Mucosa of descending colon (tissue), 3 donors: ENCODE measurements at regions of chr3 and their contacts with region 1.

Region 1: GRCh38 chr3:124826703-124827102 is 60.5 kb downstream of the ITGB5 start:
- DNase-seq: no peak
- ATAC-seq: peak; percentile 54
- H3K4me3 ChIP-seq: no peak overlapping the region
- H3K4me1 ChIP-seq: peaks cover 5% of the 10 kb centered on the region
- CTCF ChIP-seq: no peak

Region 2: DNA sequence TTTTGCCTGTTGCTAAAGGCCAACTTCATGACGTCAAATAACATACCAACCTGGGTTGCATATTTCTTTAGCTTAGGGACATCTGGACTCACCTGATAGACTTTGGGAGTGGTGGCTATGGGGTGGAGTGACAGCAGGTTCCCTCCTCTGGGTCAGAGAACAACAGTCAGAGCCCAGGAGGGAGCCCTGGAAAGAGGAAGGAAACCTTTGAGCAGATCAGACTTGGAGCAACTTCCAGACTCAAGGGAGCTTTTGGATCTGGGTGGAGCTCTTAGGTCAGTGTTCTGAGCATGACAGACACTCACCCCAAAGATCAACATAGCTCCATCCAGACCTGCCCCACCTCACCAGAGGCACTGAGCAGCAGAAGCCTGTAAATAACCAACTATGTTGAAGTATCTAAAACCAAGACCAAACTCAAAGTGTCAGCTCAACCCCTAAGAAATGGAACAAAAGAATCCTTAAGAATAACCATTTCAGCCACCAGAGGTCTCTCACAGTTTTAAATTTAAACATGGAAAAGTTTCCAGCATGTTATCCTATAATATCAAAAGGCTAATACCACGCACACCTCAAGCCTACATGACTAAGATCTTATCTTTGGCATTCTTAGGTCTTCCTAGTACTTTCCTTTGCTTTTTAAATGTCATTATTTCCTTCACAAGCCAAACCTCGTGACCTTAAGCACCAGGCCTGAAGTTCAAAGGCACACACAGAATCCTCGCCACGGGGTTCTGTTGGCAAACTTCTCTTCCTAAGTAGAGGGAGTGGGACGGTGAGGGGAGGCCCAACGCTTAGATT is 40.1 kb before region 1 on chr3:
- intact Hi-C with region 1: loop called in 1 of 2 experiments (anchors 5 kb)
- DNase-seq: peak in 1 of 3 donors; percentile 34
- ATAC-seq: peak; percentile 85
- H3K4me3 ChIP-seq: no peak overlapping the region
- H3K4me1 ChIP-seq: peaks cover 10% of the 10 kb centered on the region
- CTCF ChIP-seq: no peak